Activated T-helper 1 cell treated with anti-CD3 and anti-CD28 coated beads, Interleukin-12 subunit alpha, Interleukin-12 subunit beta, Interleukin-2, Interleukin-4 antibody, amounts not matched to agents 30 ng/mL and 10 ng/mL and 1 ng/mL, durations not matched to agents 14 hours and 24 hours and 36 hours (primary cell): ENCODE measurements at regions of chr18 and their contacts with region 1.

Region 1: GRCh38 chr18:62802523-62802922 is 87.2 kb downstream of the PHLPP1 start:
- DNase-seq: no peak
- H3K4me3 Mint-ChIP-seq: no peak overlapping the region
- H3K27ac Mint-ChIP-seq: no peak overlapping the region
- H3K4me1 Mint-ChIP-seq: no peaks in the 10 kb centered on the region
- H3K27me3 Mint-ChIP-seq: no peaks in the 10 kb centered on the region

Region 2: GRCh38 chr18:62425465-62426195 is 376.9 kb before region 1 on chr18:
- intact Hi-C with region 1: no loop called
- DNase-seq: peak; percentile 56
- H3K4me3 Mint-ChIP-seq: peak overlapping the region; percentile 19
- H3K27ac Mint-ChIP-seq: peak overlapping the region; percentile 69
- H3K4me1 Mint-ChIP-seq: peaks cover 44% of the 10 kb centered on the region
- H3K27me3 Mint-ChIP-seq: no peaks in the 10 kb centered on the region

Region 3: GRCh38 chr18:62957885-62958472 is 155.5 kb after region 1 on chr18:
- intact Hi-C with region 1: loop called (anchors 5 kb)
- DNase-seq: peak; percentile 43
- H3K4me3 Mint-ChIP-seq: no peak overlapping the region
- H3K27ac Mint-ChIP-seq: no peak overlapping the region
- H3K4me1 Mint-ChIP-seq: peaks cover 16% of the 10 kb centered on the region
- H3K27me3 Mint-ChIP-seq: no peaks in the 10 kb centered on the region